ENCODE measurements at regions of chr11 and their contacts with region 1.

Region 1: GRCh38 chr11:123062158-123062891 is 389 bp upstream of the HSPA8 start:
- DNase-seq: peak; percentile 99 to 100 (median 100)
- ATAC-seq: peak; percentile 92 to 95 (median 93)
- H3K4me3 ChIP-seq: peak overlapping the region; percentile 67 to 96 (median 92)
- H3K27ac ChIP-seq: peak overlapping the region; percentile 96 to 100 (median 99)
- H3K4me1 ChIP-seq: peaks cover 0 to 70% (median 49%) of the 10 kb centered on the region in 12 donors
- H3K27me3 ChIP-seq: no peaks in the 10 kb centered on the region
- CTCF ChIP-seq: no peak
- POLR2A ChIP-seq: peak in 1 of 2 donors; percentile 14

Region 2: GRCh38 chr11:123083623-123084029 is 21.3 kb after region 1 on chr11:
- intact Hi-C with region 1: loop called in 1 of 10 experiments (anchors 2 kb)
- DNase-seq: peak; percentile 69 to 93 (median 89)
- ATAC-seq: peak; percentile 63 to 91 (median 88)
- H3K4me3 ChIP-seq: no peak overlapping the region
- H3K27ac ChIP-seq: peak overlapping the region in 10 of 12 donors; percentile 12 to 68 (median 44)
- H3K4me1 ChIP-seq: peaks cover 0 to 34% (median 10%) of the 10 kb centered on the region in 12 donors
- H3K27me3 ChIP-seq: no peaks in the 10 kb centered on the region
- CTCF ChIP-seq: no peak
- POLR2A ChIP-seq: no peak

Region 3: DNA sequence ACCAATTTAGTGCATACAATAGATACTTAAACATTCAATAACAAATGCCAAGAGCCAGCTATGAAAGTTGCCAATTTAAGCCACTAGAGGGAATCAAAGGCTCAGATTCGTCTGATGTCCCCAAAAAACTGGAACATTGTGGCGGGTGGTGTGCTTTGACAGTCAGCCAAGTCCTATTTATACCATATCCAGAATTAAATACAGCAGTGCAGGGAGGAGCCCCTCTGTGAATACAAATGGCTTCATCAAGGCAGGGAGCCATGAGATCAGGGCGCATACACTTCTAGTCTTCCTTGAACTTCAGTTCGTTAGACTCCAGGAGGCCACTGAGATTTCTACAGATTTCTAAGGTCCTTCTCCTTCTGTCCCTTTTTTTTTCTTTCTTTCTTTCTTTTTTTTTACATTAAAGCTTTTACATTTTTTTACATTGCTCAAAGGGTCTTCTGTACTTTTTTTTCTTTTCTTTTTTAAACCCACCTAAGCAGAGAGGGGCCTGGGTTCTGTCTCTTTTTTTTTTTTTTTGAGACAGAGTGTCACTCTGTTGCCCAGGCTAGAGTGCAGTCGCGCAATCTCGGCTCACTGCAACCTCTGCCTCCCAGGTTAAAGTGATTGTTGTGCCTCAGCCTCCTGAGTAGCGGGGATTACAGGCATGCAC is 41.1 kb after region 1 on chr11:
- intact Hi-C with region 1: loop called in 2 of 10 experiments (anchors 5 kb)
- DNase-seq: peak in 4 of 5 donors; percentile 54 to 75 (median 72)
- ATAC-seq: peak; percentile 83 to 94 (median 88)
- H3K4me3 ChIP-seq: peak overlapping the region in 1 of 12 donors; percentile 5
- H3K27ac ChIP-seq: peak overlapping the region; percentile 18 to 72 (median 58)
- H3K4me1 ChIP-seq: peaks cover 0 to 43% (median 21%) of the 10 kb centered on the region in 12 donors
- H3K27me3 ChIP-seq: no peaks in the 10 kb centered on the region
- CTCF ChIP-seq: peak; percentile 51 to 77 (median 66)
- POLR2A ChIP-seq: no peak

Region 4: DNA sequence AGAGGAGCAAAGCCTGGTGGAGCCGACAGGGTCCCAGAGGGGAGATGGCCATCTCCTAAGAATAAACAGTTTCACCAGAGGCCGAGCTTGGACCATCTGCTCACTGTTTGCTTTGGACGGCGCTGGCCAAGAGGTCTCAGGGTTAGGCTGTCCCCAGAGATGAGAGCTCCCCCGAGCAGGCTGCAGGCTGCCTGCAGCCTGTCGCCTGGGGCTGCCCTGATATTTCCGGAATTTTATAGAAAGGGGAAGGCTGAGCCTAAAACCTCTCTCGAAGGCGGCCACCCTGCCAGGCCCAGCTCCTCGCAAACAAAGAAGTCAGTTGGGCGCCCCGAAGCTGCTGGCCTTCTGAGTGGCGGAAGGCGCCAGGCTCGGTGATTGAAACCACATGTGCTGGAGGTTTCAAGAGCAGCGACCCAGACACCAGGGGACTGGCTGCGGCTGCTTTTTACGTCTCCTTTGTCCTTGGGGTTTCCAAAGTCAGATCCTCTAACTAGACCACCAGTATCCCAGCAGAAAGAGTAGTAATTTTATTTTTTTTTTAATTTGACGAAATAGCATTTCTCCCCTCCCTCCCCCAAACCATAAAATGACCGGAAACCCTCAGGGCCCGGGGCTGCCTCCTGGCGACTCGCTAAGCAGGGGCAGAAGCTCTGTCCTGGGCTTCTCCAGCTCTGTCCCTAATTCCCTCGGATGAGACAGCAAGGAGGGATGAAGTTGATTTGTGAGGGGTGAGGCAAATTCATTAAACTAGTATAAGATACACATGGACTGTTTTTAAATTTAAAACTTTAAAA is 75.3 kb after region 1 on chr11:
- intact Hi-C with region 1: loop called in 1 of 10 experiments (anchors 2 kb)
- DNase-seq: peak; percentile 76 to 91 (median 82)
- ATAC-seq: peak; percentile 72 to 95 (median 92)
- H3K4me3 ChIP-seq: peak overlapping the region in 7 of 12 donors; percentile 0 to 28 (median 9)
- H3K27ac ChIP-seq: peak overlapping the region in 11 of 12 donors; percentile 3 to 75 (median 61)
- H3K4me1 ChIP-seq: peaks cover 0 to 14% (median 6%) of the 10 kb centered on the region in 12 donors
- H3K27me3 ChIP-seq: peaks cover 0 to 8% (median 0%) of the 10 kb centered on the region in 9 donors
- CTCF ChIP-seq: no peak
- POLR2A ChIP-seq: no peak